Dorsolateral prefrontal cortex (tissue), 120 donors: ENCODE measurements at regions of chr15 and their contacts with region 1.

Region 1: GRCh38 chr15:40108855-40109735 is at the start of gene BMF:
- DNase-seq: peak; percentile 96 to 99 (median 98)
- H3K4me3 ChIP-seq: peak within 1 kb of the TSS; percentile 35 to 91 (median 71)
- H3K27ac ChIP-seq: peak within 1 kb of the TSS in 36 of 59 donors; percentile 10 to 79 (median 56)
- H3K27me3 ChIP-seq: no peaks in the 10 kb centered on the region
- CTCF ChIP-seq: peak in 49 of 56 donors; percentile 14 to 64 (median 44)
- total RNA-seq, gene BMF: 0.89 to 7.2 (median 2.6) TPM

Region 2: DNA sequence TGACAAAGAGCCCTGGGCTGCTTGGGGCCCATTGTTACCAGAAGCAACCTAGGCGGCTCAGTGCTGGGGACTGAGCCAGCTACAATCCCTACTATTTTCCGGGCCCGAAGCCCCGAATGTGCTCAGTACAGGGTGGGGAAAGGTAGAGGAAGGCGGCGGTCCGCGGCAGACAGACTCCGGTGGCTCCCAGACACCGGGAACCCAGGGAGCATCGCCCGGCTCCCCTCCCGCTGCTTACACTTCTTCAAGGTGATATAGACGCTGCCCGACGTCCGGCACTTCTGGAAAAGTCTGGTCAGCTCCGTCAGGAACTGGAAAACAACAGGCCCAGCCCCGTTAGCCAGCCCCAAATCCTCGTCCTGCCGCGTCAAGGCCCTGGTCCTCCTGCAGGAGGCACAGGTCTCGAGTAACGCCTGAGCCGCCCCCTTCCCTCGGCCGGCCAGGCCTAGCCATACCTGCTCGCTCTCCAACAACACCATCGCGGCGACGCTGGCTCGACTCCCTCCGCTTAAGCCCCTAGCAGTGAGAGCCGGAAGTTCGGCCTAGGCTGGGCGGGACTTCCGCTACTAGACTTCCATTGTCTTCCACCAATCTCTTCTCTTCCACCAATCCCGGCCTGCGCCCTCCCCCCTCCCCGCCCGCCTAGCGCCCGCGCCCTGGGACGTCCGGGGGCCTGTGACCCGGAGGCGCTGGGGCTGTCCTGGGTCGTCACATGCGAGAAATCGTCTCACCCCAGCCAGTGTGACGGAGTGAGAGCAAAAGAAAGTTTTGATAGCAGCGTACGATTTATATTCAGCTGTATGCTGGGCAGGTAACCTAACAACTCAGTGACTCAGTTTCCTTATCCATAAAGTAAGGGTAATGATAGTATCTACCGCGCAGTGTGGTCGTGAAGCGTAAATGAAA is 70.2 kb before region 1 on chr15 and contains the start of gene SRP14:
- intact Hi-C with region 1: loop called (anchors 2 to 5 kb)
- DNase-seq: peak; percentile 94 to 96 (median 94)
- H3K4me3 ChIP-seq: peak within 1 kb of the TSS; percentile 59 to 100 (median 94)
- H3K27ac ChIP-seq: peak within 1 kb of the TSS; percentile 57 to 99 (median 94)
- H3K27me3 ChIP-seq: no peaks in the 10 kb centered on the region
- CTCF ChIP-seq: peak in 49 of 56 donors; percentile 3 to 63 (median 42)
- total RNA-seq, gene SRP14: 118 to 280 (median 179) TPM

Region 3: GRCh38 chr15:40069178-40070165 is 39.6 kb before region 1 on chr15:
- intact Hi-C with region 1: loop called (anchors 1 to 5 kb)
- DNase-seq: peak; percentile 72 to 97 (median 96)
- H3K4me3 ChIP-seq: peak overlapping the region in 2 of 59 donors; percentile 4 to 16
- H3K27ac ChIP-seq: peak overlapping the region in 56 of 59 donors; percentile 2 to 84 (median 72)
- H3K27me3 ChIP-seq: peaks cover 0 to 3% (median 0%) of the 10 kb centered on the region in 45 donors
- CTCF ChIP-seq: peak in 23 of 56 donors; percentile 8 to 55 (median 27)

Region 4: DNA sequence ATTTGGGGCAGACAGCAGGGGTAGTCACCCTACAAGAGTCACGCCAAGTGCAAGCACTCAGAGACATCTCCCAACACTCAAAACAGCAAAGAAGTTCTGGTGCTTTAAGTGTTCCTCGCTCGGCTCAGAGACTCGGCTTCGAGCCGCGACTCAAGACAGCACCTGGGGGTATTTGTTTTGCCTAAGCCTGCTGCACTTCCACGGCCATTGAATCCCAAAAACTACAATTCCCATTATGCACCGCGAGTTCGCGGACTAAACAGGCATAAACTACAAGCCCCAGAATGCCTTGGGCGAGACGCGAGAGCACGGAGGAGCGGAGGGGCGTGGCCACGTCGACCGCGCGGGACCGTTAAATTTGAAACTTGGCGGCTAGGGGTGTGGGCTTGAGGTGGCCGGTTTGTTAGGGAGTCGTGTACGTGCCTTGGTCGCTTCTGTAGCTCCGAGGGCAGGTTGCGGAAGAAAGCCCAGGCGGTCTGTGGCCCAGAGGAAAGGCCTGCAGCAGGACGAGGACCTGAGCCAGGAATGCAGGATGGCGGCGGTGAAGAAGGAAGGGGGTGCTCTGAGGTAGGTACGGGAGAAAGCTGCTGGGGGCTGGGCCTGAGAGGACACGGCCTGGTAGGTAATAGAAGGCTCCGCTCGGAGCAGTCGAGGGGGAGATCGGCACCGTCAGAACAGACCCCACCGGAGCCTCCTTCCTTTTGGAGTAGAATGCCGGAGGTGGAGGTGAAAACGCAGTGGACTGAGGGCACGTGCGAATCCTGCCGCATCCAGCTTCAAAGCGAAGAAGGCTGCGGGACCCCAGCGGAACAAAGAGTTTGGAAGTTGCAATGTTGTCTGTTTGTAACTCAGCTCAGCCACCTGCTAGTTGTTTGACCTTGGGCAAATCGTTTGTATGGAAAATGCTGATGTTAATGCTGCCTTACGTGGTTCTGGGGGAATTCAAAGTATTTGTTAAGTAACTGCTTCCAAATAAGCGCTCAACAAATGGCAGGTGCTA is 51.9 kb after region 1 on chr15 and contains the start of gene BUB1B:
- intact Hi-C with region 1: loop called (anchors 1 to 10 kb)
- DNase-seq: peak; percentile 78 to 95 (median 92)
- H3K4me3 ChIP-seq: peak within 1 kb of the TSS; percentile 23 to 80 (median 61)
- H3K27ac ChIP-seq: peak within 1 kb of the TSS in 5 of 59 donors; percentile 3 to 59 (median 14)
- H3K27me3 ChIP-seq: no peaks in the 10 kb centered on the region
- CTCF ChIP-seq: peak in 27 of 56 donors; percentile 6 to 60 (median 27)
- total RNA-seq, gene BUB1B: 0.13 to 8.5 (median 1.8) TPM in 113 of 120 experiments, not detected in the others

Region 5: GRCh38 chr15:40217159-40217824 is 108.2 kb after region 1 on chr15:
- intact Hi-C with region 1: loop called in 1 of 2 experiments (anchors 5 kb)
- DNase-seq: peak in 3 of 10 donors; percentile 19 to 57 (median 34)
- H3K4me3 ChIP-seq: peak overlapping the region in 27 of 59 donors; percentile 2 to 40 (median 18)
- H3K27ac ChIP-seq: peak overlapping the region in 16 of 59 donors; percentile 4 to 68 (median 44)
- H3K27me3 ChIP-seq: peaks cover 0 to 5% (median 0%) of the 10 kb centered on the region in 45 donors
- CTCF ChIP-seq: peak; percentile 80 to 98 (median 88)